Activated CD8-positive, alpha-beta T cell treated with anti-CD3 and anti-CD28 coated beads, Interleukin-2, amount 10 ng/mL, durations not matched to agents 7 days and 5 days (primary cell): ENCODE measurements at regions of chr2 and their contacts with region 1.

Region 1: DNA sequence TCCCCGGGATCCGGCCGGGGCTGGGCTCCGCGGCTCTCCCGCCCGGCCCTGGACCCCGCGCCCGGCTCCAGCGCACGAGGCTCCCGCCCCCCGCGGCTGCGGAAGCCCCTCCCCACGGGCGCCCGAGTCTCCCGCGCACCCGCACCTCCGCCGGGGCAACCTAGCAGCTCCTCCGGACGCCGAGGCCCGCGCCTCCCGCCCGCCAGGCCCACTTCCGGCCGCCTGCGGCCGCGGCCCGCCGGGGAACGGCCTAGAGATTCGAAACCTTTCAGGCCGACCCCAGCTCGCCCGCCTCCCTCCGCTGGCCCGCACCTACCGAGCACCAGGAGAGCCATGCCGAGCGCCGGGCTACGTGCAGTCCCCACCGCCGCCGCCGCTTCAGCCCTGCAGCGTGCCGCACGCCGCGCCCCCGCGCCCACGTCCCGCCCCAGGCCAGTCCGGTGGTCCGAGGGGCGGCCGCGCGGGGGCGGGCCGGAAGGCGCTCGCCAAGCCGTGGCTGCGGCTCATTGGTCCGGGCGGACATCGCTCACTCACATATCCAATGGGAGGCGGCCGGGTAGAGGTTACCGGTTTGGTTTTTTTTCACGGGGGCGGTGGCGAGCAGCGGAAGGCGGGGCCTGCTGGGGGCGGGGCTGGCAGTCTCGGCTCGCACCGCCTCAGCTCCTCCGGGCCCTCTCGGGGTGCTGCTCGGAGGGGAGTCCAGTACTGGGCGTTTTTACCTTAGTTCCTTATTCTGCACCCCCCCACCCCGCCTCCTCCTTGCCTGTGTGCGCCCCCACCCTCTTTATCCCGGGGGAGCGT is at the start of gene PDIA6:
- DNase-seq: peak; percentile 96
- ATAC-seq: peak; percentile 97
- H3K4me3 Mint-ChIP-seq: peak within 1 kb of the TSS; percentile 87
- H3K27ac Mint-ChIP-seq: peak within 1 kb of the TSS; percentile 93
- H3K4me1 Mint-ChIP-seq: peaks cover 36% of the 10 kb centered on the region
- H3K27me3 Mint-ChIP-seq: peaks cover 13% of the 10 kb centered on the region
- total RNA-seq, gene PDIA6: 131 to 138 TPM

Region 2: DNA sequence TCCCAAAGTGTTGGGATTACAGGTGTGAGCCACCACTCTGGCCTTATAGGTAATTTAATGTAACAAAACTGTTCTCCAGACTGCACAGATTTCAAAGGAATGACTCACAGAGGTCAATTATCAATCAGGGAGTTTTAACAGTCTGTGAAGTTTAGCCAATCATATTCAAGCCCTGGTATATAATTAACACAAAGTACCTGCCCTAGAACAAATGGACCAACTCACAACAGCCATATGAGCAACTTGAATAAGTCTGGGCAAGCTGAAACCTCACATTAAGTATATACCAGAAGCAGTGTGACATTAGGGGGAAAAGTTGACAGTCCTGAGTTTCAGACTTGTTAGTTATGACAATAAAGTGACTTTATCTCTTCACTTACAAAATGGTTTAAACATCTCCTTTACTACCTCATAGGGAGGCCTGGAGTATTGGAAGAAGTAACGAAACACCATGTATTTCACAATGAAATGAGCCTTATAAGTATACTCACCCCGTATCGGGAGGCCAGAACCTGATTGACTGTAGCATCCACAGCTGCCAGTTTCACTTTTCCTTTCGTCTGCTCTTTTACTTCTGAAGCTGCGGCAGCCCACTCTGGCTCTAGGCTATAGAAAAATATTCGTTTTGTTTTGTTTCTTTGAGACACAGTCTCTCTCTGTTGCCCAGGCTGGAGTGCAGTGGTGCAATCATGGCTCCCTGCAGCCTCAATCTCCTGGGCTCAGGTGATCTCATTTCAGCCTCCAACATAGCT is 22.2 kb before region 1 on chr2:
- CTCF ChIA-PET with region 1: interaction called, 5 read pairs
- POLR2A ChIA-PET with region 1: interaction called, 11 read pairs
- DNase-seq: peak; percentile 35
- ATAC-seq: peak; percentile 70
- H3K4me3 Mint-ChIP-seq: peak overlapping the region; percentile 14
- H3K27ac Mint-ChIP-seq: peak overlapping the region; percentile 36
- H3K4me1 Mint-ChIP-seq: peaks cover 21% of the 10 kb centered on the region
- H3K27me3 Mint-ChIP-seq: no peaks in the 10 kb centered on the region

Region 3: DNA sequence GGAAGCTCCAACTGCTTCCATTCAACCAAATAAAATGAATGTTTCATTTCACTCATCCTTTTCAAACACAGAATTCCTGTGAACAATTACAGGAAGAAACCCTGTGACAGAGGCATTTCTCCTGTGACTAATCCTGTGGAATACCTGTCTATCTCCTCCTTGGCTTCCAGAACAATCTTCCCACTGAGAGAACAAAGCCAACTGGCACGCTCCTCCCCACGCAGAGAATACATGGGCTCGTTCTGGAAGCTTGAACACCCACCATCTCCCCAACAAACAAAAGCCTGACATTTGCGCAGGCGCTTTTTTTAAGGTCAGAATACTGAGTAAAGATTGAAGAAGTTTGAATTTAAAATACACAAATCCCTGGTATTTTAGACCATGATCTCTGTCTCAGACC is 238.0 kb after region 1 on chr2:
- CTCF ChIA-PET with region 1: no interaction called
- POLR2A ChIA-PET with region 1: no interaction called
- DNase-seq: no peak
- ATAC-seq: no peak
- H3K4me3 Mint-ChIP-seq: no peak overlapping the region
- H3K27ac Mint-ChIP-seq: no peak overlapping the region
- H3K4me1 Mint-ChIP-seq: no peaks in the 10 kb centered on the region
- H3K27me3 Mint-ChIP-seq: peaks cover 4% of the 10 kb centered on the region